T-cell (primary cell): ENCODE measurements at regions of chr2 and their contacts with region 1.

Region 1: GRCh38 chr2:233228376-233228775 is 23.1 kb upstream of the ATG16L1 start:
- DNase-seq: no peak
- ATAC-seq: no peak
- H3K4me3 ChIP-seq: no peak overlapping the region
- H3K4me3 Mint-ChIP-seq: no peak overlapping the region
- H3K27ac ChIP-seq: no peak overlapping the region
- H3K27ac Mint-ChIP-seq: no peak overlapping the region
- H3K4me1 ChIP-seq: peaks cover 0 to 31% of the 10 kb centered on the region in 2 experiments
- H3K4me1 Mint-ChIP-seq: peaks cover 0 to 21% (median 12%) of the 10 kb centered on the region in 3 donors
- H3K27me3 ChIP-seq: no peaks in the 10 kb centered on the region
- H3K27me3 Mint-ChIP-seq: no peaks in the 10 kb centered on the region

Region 2: GRCh38 chr2:233059797-233060500 is 168.4 kb before region 1 on chr2 and contains the start of gene INPP5D:
- CTCF ChIA-PET with region 1: no interaction called
- POLR2A ChIA-PET with region 1: interaction called in 1 of 2 experiments, 10 read pairs
- DNase-seq: peak; percentile 56 to 88 (median 74)
- ATAC-seq: peak; percentile 81 to 87 (median 82)
- H3K4me3 ChIP-seq: peak within 1 kb of the TSS; percentile 99
- H3K4me3 Mint-ChIP-seq: peak within 1 kb of the TSS; percentile 95 to 97 (median 95)
- H3K27ac ChIP-seq: peak within 1 kb of the TSS; percentile 98
- H3K27ac Mint-ChIP-seq: peak within 1 kb of the TSS; percentile 94 to 96
- H3K4me1 ChIP-seq: peaks cover 19 to 66% of the 10 kb centered on the region in 2 experiments
- H3K4me1 Mint-ChIP-seq: peaks cover 39 to 43% (median 43%) of the 10 kb centered on the region in 3 donors
- H3K27me3 ChIP-seq: no peaks in the 10 kb centered on the region
- H3K27me3 Mint-ChIP-seq: no peaks in the 10 kb centered on the region
- total RNA-seq, gene INPP5D: 108 to 216 (median 135) TPM

Region 3: DNA sequence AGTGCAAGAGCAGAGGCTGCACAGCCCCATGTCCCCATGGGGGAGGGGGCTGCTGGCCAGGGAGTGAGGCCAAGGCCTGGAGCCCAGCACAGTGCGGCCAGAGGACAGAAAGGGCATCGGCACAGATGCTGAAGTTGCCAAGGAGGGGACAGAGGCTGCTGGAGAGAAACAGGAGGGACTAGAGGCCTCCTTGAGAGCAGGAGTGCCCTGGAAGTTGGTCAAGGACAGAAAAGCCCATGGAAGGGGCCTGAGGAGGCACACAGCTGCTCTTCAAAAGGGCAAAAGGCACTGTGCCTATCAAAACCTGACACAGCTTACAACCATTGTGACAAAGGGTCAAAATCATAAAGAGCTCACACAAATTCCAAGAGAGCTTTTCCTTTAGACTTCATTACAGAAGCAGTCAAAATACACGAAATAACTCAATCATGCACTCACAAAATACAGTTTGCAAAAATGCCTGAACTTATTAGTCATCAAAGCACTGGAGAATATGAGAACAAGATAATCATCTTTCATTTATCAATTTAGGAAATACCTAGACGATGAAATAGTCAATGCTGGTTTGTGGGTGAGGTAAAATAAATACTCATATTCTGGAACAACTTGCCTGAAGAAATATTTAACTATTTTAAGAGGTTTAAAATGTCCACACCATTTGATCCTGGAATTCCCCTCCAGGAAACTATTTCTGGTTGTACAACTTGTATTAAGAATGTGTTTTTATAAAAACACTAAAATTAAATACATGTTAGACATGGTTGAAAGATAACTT is 258.6 kb after region 1 on chr2:
- CTCF ChIA-PET with region 1: no interaction called
- POLR2A ChIA-PET with region 1: no interaction called
- DNase-seq: no peak
- ATAC-seq: no peak
- H3K4me3 ChIP-seq: no peak overlapping the region
- H3K4me3 Mint-ChIP-seq: no peak overlapping the region
- H3K27ac ChIP-seq: no peak overlapping the region
- H3K27ac Mint-ChIP-seq: no peak overlapping the region
- H3K4me1 ChIP-seq: no peaks in the 10 kb centered on the region
- H3K4me1 Mint-ChIP-seq: no peaks in the 10 kb centered on the region
- H3K27me3 ChIP-seq: no peaks in the 10 kb centered on the region
- H3K27me3 Mint-ChIP-seq: no peaks in the 10 kb centered on the region

Region 4: DNA sequence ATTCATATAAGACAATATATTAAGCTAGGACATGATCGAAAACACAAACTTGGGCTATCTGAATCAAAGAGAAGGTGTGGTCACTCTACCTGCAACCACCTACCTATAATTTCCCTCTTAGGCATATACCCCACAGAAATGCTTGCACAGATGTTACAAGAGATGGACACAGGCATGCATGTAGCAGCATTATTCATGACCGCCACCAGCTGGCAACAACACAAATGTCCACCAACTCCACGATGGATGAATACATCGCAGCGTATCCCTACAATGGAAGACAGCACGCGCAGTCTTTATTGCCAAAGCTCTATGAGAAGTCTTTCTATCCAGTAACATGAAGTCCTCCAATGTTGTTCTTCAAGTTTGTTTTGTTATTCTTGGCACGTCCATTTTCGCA is 1177.7 kb after region 1 on chr2:
- CTCF ChIA-PET with region 1: no interaction called
- POLR2A ChIA-PET with region 1: no interaction called
- DNase-seq: no peak
- ATAC-seq: no peak
- H3K4me3 ChIP-seq: no peak overlapping the region
- H3K4me3 Mint-ChIP-seq: no peak overlapping the region
- H3K27ac ChIP-seq: no peak overlapping the region
- H3K27ac Mint-ChIP-seq: no peak overlapping the region
- H3K4me1 ChIP-seq: peaks cover 0 to 4% of the 10 kb centered on the region in 2 experiments
- H3K4me1 Mint-ChIP-seq: peaks cover 43 to 52% (median 52%) of the 10 kb centered on the region in 3 donors
- H3K27me3 ChIP-seq: no peaks in the 10 kb centered on the region
- H3K27me3 Mint-ChIP-seq: no peaks in the 10 kb centered on the region

Region 5: GRCh38 chr2:234571620-234572407 is 1343.4 kb after region 1 on chr2:
- CTCF ChIA-PET with region 1: no interaction called
- POLR2A ChIA-PET with region 1: no interaction called
- DNase-seq: no peak
- ATAC-seq: no peak
- H3K4me3 ChIP-seq: no peak overlapping the region
- H3K4me3 Mint-ChIP-seq: no peak overlapping the region
- H3K27ac ChIP-seq: no peak overlapping the region
- H3K27ac Mint-ChIP-seq: no peak overlapping the region
- H3K4me1 ChIP-seq: no peaks in the 10 kb centered on the region
- H3K4me1 Mint-ChIP-seq: peaks cover 0 to 4% (median 0%) of the 10 kb centered on the region in 3 donors
- H3K27me3 ChIP-seq: peaks cover 0 to 15% of the 10 kb centered on the region in 2 experiments
- H3K27me3 Mint-ChIP-seq: peaks cover 42 to 49% of the 10 kb centered on the region in 2 donors